ENCODE measurements at regions of chr19 and their contacts with region 1.

Region 1: DNA sequence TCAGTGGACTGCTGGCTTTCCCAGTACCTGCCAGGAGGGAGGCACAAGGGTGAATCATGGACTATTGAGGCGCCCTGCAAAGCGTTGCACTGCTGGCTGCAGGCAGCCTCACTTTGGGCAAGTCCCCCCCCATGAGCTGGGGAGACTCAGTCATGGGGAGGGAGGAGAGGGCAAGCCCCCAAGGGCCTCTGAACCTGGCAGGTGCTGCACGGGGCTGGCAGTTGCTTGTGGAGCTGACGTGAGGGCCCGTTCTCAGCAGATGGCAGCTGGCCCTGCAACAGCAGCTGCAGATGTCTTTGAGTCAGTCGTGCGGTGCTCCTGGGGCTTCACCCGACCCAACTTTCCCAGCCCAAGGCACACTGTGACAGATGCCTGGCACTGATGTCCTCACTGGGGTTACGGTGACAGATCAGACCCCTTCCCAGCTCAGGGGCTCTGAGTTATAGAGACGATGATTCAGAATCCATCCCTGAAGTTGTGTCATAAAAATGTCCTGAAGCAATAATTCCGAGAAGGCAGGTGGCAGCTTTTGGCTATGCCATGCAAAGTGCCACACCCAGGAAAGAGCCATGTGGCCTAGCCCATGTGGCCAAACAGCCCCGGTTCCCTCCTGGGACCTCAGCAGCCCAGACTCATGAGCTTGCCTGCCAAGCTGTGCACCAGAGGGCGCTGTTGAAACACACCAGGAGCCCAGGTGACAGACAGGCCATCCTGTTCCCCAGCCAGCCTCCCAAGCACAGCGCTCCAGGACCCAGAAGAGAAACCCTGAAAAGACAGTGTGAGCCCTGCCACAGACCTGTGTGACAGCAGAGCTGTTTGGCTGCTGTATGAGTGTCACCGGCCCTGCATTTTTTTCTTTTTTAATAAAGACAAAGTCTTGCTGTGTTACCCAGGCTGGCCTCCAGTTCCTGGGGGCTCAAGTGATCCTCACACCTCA is 53.6 kb upstream of the LDLR start:
- DNase-seq: peak; percentile 73 to 92 (median 87)
- ATAC-seq: peak; percentile 96
- H3K4me3 ChIP-seq: no peak overlapping the region
- H3K4me3 Mint-ChIP-seq: no peak overlapping the region
- H3K27ac ChIP-seq: no peak overlapping the region
- H3K27ac Mint-ChIP-seq: no peak overlapping the region
- H3K4me1 ChIP-seq: no peaks in the 10 kb centered on the region
- H3K4me1 Mint-ChIP-seq: peaks cover 4% of the 10 kb centered on the region
- H3K27me3 ChIP-seq: no peaks in the 10 kb centered on the region
- H3K27me3 Mint-ChIP-seq: no peaks in the 10 kb centered on the region
- CTCF ChIP-seq: peak; percentile 72

Region 2: DNA sequence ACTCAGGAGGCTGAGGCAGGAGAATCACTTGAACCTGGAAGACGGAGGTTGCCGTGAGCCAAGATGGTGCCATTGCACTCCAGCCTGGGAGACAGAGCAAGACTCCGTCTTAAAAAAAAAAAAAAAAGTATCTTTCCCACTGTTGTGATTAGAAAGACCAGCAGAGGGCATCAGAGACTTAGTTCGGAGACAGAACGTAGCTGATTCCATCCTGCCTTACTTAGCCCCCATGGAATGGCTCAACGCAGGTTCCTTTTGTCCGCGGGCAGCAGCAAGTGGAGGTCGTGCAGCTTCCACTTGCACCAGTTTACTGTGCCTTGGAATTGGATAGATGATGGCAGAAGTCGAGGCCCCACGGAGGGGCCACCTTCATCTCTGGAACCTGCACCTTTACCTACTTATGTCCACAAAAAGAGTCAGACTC is 99.0 kb before region 1 on chr19:
- CTCF ChIA-PET with region 1: interaction called, 13 read pairs
- POLR2A ChIA-PET with region 1: no interaction called
- intact Hi-C with region 1: no loop called
- DNase-seq: peak in 5 of 9 experiments; percentile 33 to 76 (median 50)
- ATAC-seq: peak; percentile 79
- H3K4me3 ChIP-seq: no peak overlapping the region
- H3K4me3 Mint-ChIP-seq: no peak overlapping the region
- H3K27ac ChIP-seq: no peak overlapping the region
- H3K27ac Mint-ChIP-seq: no peak overlapping the region
- H3K4me1 ChIP-seq: no peaks in the 10 kb centered on the region
- H3K4me1 Mint-ChIP-seq: peaks cover 8% of the 10 kb centered on the region
- H3K27me3 ChIP-seq: no peaks in the 10 kb centered on the region
- H3K27me3 Mint-ChIP-seq: no peaks in the 10 kb centered on the region
- CTCF ChIP-seq: peak; percentile 60

Region 3: GRCh38 chr19:11064831-11065303 is 29.2 kb after region 1 on chr19:
- CTCF ChIA-PET with region 1: interaction called, 12 read pairs
- POLR2A ChIA-PET with region 1: no interaction called
- intact Hi-C with region 1: no loop called
- DNase-seq: no peak
- ATAC-seq: no peak
- H3K4me3 ChIP-seq: no peak overlapping the region
- H3K4me3 Mint-ChIP-seq: no peak overlapping the region
- H3K27ac ChIP-seq: no peak overlapping the region
- H3K27ac Mint-ChIP-seq: peak overlapping the region; percentile 22
- H3K4me1 ChIP-seq: no peaks in the 10 kb centered on the region
- H3K4me1 Mint-ChIP-seq: no peaks in the 10 kb centered on the region
- H3K27me3 ChIP-seq: no peaks in the 10 kb centered on the region
- H3K27me3 Mint-ChIP-seq: no peaks in the 10 kb centered on the region
- CTCF ChIP-seq: no peak

Region 4: GRCh38 chr19:11090054-11090900 is 54.6 kb after region 1 on chr19:
- CTCF ChIA-PET with region 1: interaction called, 23 read pairs
- POLR2A ChIA-PET with region 1: no interaction called
- intact Hi-C with region 1: loop called (anchors 2 to 5 kb)
- DNase-seq: peak; percentile 95 to 98 (median 98)
- ATAC-seq: peak; percentile 84
- H3K4me3 ChIP-seq: peak overlapping the region; percentile 78 to 93
- H3K4me3 Mint-ChIP-seq: peak overlapping the region; percentile 86
- H3K27ac ChIP-seq: peak overlapping the region; percentile 97 to 99
- H3K27ac Mint-ChIP-seq: peak overlapping the region; percentile 96
- H3K4me1 ChIP-seq: peaks cover 44% of the 10 kb centered on the region
- H3K4me1 Mint-ChIP-seq: peaks cover 47% of the 10 kb centered on the region
- H3K27me3 ChIP-seq: no peaks in the 10 kb centered on the region
- H3K27me3 Mint-ChIP-seq: no peaks in the 10 kb centered on the region
- CTCF ChIP-seq: no peak

Region 5: DNA sequence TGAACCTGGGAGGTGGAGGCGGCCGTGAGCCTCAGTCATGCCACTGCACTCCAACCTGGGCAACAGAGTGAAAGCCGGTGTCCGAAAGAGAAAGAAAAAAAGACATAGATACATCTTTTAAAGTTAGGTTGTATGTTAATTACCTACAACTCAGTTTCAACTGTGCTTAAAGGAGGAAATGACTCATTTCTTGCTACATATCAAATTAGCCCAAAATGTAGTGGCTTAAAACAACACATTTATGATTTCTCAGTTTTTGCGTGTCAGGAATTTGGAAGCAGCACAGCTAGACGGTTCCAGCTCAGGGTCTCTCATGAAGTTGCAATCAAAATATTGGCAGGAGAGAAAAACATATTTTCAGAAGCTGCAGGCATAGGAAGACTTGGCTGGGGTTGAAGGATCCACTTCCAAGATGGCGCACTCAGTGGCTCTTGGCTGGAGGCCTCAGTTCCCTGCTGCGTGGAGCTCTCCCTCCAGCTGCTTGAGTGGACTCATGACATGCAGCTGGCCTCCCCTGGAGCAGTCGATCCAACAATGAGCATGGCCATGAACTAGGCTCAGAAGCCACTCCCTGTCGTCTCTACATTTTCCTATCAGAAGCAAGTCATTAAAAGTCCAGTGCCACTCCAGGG is 60.6 kb after region 1 on chr19:
- CTCF ChIA-PET with region 1: interaction called, 23 read pairs
- POLR2A ChIA-PET with region 1: interaction called, 3 read pairs
- intact Hi-C with region 1: loop called in 1 of 2 experiments (anchors 5 kb)
- DNase-seq: peak in 4 of 9 experiments; percentile 28 to 69 (median 55)
- ATAC-seq: peak; percentile 18
- H3K4me3 ChIP-seq: peak overlapping the region in 1 of 2 experiments; percentile 14
- H3K4me3 Mint-ChIP-seq: peak overlapping the region; percentile 64
- H3K27ac ChIP-seq: peak overlapping the region in 1 of 2 experiments; percentile 88
- H3K27ac Mint-ChIP-seq: peak overlapping the region; percentile 90
- H3K4me1 ChIP-seq: peaks cover 40% of the 10 kb centered on the region
- H3K4me1 Mint-ChIP-seq: peaks cover 43% of the 10 kb centered on the region
- H3K27me3 ChIP-seq: no peaks in the 10 kb centered on the region
- H3K27me3 Mint-ChIP-seq: no peaks in the 10 kb centered on the region
- CTCF ChIP-seq: no peak

Region 6: GRCh38 chr19:11137542-11138384 is 102.1 kb after region 1 on chr19:
- CTCF ChIA-PET with region 1: interaction called, 10 read pairs
- POLR2A ChIA-PET with region 1: interaction called, 3 read pairs
- intact Hi-C with region 1: no loop called
- DNase-seq: peak in 8 of 9 experiments; percentile 18 to 80 (median 58)
- ATAC-seq: peak; percentile 82
- H3K4me3 ChIP-seq: peak overlapping the region; percentile 48 to 57
- H3K4me3 Mint-ChIP-seq: peak overlapping the region; percentile 84
- H3K27ac ChIP-seq: no peak overlapping the region
- H3K27ac Mint-ChIP-seq: no peak overlapping the region
- H3K4me1 ChIP-seq: peaks cover 13% of the 10 kb centered on the region
- H3K4me1 Mint-ChIP-seq: peaks cover 10% of the 10 kb centered on the region
- H3K27me3 ChIP-seq: no peaks in the 10 kb centered on the region
- H3K27me3 Mint-ChIP-seq: no peaks in the 10 kb centered on the region
- CTCF ChIP-seq: peak; percentile 55

Region 7: GRCh38 chr19:11203194-11204075 is 167.7 kb after region 1 on chr19:
- CTCF ChIA-PET with region 1: interaction called, 10 read pairs
- POLR2A ChIA-PET with region 1: no interaction called
- intact Hi-C with region 1: loop called (anchors 1 kb)
- DNase-seq: peak in 7 of 9 experiments; percentile 18 to 65 (median 42)
- ATAC-seq: no peak
- H3K4me3 ChIP-seq: no peak overlapping the region
- H3K4me3 Mint-ChIP-seq: no peak overlapping the region
- H3K27ac ChIP-seq: no peak overlapping the region
- H3K27ac Mint-ChIP-seq: no peak overlapping the region
- H3K4me1 ChIP-seq: no peaks in the 10 kb centered on the region
- H3K4me1 Mint-ChIP-seq: no peaks in the 10 kb centered on the region
- H3K27me3 ChIP-seq: no peaks in the 10 kb centered on the region
- H3K27me3 Mint-ChIP-seq: peaks cover 3% of the 10 kb centered on the region
- CTCF ChIP-seq: no peak